Panc1 (cell line): ENCODE measurements at regions of chr2 and their contacts with region 1.

Region 1: DNA sequence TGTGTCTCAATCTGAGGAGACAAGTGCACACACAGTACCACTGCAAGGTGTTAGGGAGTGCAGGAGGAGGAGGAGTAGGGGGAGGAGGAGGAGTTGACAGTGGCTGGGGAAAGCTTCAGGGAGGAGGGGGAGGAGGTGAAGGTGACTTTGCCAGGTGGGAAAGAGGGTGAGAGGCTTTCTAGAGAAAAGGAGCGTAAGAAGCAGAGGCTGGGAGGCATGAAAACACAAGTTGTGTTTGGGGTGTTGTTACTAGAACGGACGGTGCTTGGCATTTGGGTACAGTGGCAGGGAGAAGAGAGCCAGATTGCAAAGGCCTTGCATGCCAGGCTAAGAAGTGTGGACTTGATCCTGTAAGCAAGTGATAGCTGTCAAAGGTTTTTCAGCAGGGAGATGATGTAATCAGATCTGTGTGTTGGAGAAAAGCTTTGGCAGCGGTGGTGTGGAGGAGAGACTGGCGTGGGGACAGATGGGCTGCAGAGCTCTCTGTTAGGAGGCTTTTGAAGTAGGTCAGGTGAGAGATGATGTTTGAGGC is 16.2 kb downstream of the TANC1 start:
- DNase-seq: no peak
- ATAC-seq: peak; percentile 56; the same call in 1 of the 2 replicates
- H3K4me3 ChIP-seq: no peak overlapping the region
- H3K27ac ChIP-seq: peak overlapping the region; percentile 3; the same call in 1 of the 2 replicates
- H3K4me1 ChIP-seq: peaks cover 41% of the 10 kb centered on the region
- H3K27me3 ChIP-seq: no peaks in the 10 kb centered on the region
- CTCF ChIP-seq: no peak

Region 2: DNA sequence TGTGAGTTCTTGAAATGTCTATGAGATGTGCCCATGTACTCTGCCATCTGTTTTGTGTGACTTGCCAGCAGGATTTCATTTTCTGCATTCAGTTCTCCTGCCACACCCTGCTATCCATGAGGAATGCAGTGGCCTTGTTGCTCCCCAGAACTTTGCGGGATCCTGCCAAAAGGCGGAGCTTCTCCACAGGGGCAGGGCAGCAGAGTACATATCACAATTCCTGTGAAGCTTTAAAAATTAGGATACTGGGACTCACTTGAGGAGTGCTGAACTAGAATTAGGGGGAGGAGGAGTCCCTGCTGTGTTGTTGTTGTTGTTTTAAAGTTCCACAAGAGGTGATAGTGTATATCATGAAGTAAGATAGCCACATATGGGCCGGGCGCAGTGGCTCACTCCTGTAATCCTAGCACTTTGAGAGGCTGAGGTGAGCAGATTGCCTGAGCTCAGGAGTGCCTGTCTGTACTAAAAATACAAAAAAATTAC is 60.2 kb after region 1 on chr2:
- CTCF ChIA-PET with region 1: no interaction called
- POLR2A ChIA-PET with region 1: interaction called, 10 read pairs
- in situ Hi-C with region 1: no loop called
- intact Hi-C with region 1: no loop called
- DNase-seq: no peak
- ATAC-seq: peak; percentile 51
- H3K4me3 ChIP-seq: no peak overlapping the region
- H3K27ac ChIP-seq: peak overlapping the region; percentile 20; the same call in 1 of the 2 replicates
- H3K4me1 ChIP-seq: peaks cover 3% of the 10 kb centered on the region; the same call in 1 of the 2 replicates
- H3K27me3 ChIP-seq: no peaks in the 10 kb centered on the region
- CTCF ChIP-seq: no peak